Transverse colon (tissue), 4 donors: ENCODE measurements at regions of chr3 and their contacts with region 1.

Region 1: DNA sequence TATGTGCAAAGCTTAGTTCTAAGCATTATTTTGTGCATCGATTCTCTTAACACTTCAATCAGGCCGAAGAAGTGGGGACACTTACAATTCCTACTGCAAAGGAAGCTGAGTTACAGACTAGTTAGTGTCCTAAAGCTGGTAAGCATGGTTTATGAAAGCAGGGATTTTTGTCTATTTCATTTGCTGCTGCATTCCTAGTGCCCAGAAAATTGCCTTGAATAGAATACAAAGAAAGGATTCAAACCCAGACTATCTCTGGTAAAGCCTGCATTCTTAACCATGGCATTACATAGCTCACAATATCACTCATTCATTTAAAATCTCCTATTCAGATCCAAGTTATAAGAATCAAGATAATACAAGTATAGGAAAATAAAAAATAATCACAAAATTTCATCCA is 24.4 kb upstream of the CPOX start:
- DNase-seq: no peak
- H3K4me3 ChIP-seq: no peak overlapping the region
- H3K27ac ChIP-seq: no peak overlapping the region
- H3K4me1 ChIP-seq: no peaks in the 10 kb centered on the region
- H3K27me3 ChIP-seq: no peaks in the 10 kb centered on the region
- CTCF ChIP-seq: no peak
- EP300 ChIP-seq: no peak
- POLR2A ChIP-seq: no peak

Region 2: GRCh38 chr3:97552186-97552585 is 1065.7 kb before region 1 on chr3:
- in situ Hi-C with region 1: no loop called
- intact Hi-C with region 1: no loop called
- DNase-seq: no peak
- H3K4me3 ChIP-seq: no peak overlapping the region
- H3K27ac ChIP-seq: no peak overlapping the region
- H3K4me1 ChIP-seq: no peaks in the 10 kb centered on the region
- H3K27me3 ChIP-seq: no peaks in the 10 kb centered on the region
- CTCF ChIP-seq: no peak
- EP300 ChIP-seq: no peak
- POLR2A ChIP-seq: no peak

Region 3: GRCh38 chr3:97952280-97952679 is 665.6 kb before region 1 on chr3:
- in situ Hi-C with region 1: no loop called
- intact Hi-C with region 1: no loop called
- DNase-seq: peak; percentile 43
- H3K4me3 ChIP-seq: no peak overlapping the region
- H3K27ac ChIP-seq: peak overlapping the region; percentile 2 to 43 (median 34)
- H3K4me1 ChIP-seq: peaks cover 0 to 13% (median 0%) of the 10 kb centered on the region in 4 donors
- H3K27me3 ChIP-seq: no peaks in the 10 kb centered on the region
- CTCF ChIP-seq: no peak
- EP300 ChIP-seq: no peak
- POLR2A ChIP-seq: no peak

Region 4: DNA sequence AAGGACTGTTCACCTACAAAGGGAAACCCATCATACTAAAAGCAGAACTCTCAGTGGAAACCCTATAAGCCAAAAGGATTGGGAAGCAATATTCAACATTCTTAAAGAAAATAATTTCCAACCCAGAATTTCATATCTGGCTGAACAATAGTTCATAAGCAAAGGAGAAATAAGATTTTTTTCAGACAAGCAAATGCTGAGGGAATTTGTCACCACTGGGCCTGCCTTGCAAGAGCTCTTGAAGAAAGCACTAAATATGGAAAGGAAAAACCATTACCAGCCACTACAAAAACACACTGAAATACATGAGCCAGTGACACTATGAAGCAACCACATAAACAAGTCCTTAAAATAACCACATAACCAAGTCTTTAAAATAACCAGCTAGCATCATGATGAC is 312.6 kb after region 1 on chr3:
- in situ Hi-C with region 1: no loop called
- intact Hi-C with region 1: loop called (anchors 5 kb)
- DNase-seq: no peak
- H3K4me3 ChIP-seq: no peak overlapping the region
- H3K27ac ChIP-seq: no peak overlapping the region
- H3K4me1 ChIP-seq: no peaks in the 10 kb centered on the region
- H3K27me3 ChIP-seq: no peaks in the 10 kb centered on the region
- CTCF ChIP-seq: no peak
- EP300 ChIP-seq: no peak
- POLR2A ChIP-seq: no peak